CD4-positive, alpha-beta memory T cell (primary cell): ENCODE measurements at regions of chr12 and their contacts with region 1.

Region 1: DNA sequence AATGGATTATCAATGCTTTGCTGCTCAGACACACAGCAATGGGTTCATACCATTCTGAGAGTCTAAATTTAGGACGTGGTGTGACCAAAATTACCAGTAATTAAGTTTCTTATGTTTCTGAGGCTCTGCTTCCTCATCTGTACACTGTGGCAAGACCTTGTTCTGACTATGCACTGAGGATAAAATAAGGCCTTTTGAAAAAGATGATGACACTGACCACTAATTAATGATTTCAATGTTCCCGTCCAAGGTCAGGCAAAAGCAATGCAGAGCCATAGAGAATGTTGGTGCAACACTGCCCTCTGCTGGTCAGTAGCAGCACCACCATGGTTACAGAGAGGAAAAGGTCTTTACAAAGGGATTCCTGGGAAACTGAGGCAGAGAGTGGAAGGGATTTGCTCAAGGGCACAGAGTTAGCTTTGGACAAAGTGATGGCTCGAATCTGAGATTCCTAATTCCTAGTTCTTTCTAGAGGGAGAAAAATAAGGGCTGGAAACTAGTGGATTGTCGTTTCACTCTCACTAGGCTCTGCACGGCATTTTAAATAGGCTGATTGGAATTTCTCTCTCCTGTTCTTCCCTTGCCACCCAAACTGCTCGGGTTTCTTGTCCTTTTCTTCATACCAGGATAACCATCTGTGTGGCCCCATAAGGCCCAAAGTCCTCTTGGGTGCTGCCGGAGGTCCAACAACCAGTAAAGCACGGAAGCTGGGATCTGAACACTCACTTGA is 22.3 kb upstream of the P2RX7 start:
- DNase-seq: peak in 4 of 5 donors; percentile 50 to 56 (median 54)
- H3K4me3 ChIP-seq: no peak overlapping the region
- H3K4me3 Mint-ChIP-seq: no peak overlapping the region
- H3K27ac ChIP-seq: no peak overlapping the region
- H3K27ac Mint-ChIP-seq: peak overlapping the region in 2 of 7 donors; percentile 2 to 3
- H3K4me1 ChIP-seq: no peaks in the 10 kb centered on the region
- H3K4me1 Mint-ChIP-seq: peaks cover 0 to 5% (median 4%) of the 10 kb centered on the region in 4 donors
- H3K27me3 ChIP-seq: no peaks in the 10 kb centered on the region
- H3K27me3 Mint-ChIP-seq: no peaks in the 10 kb centered on the region

Region 2: GRCh38 chr12:120944645-120945231 is 165.6 kb before region 1 on chr12:
- CTCF ChIA-PET with region 1: interaction called, 10 read pairs
- POLR2A ChIA-PET with region 1: no interaction called
- intact Hi-C with region 1: no loop called
- DNase-seq: peak; percentile 43 to 57 (median 51)
- H3K4me3 ChIP-seq: no peak overlapping the region
- H3K4me3 Mint-ChIP-seq: no peak overlapping the region
- H3K27ac ChIP-seq: no peak overlapping the region
- H3K27ac Mint-ChIP-seq: peak overlapping the region in 2 of 7 donors; percentile 25 to 53
- H3K4me1 ChIP-seq: no peaks in the 10 kb centered on the region
- H3K4me1 Mint-ChIP-seq: peaks cover 0 to 4% (median 2%) of the 10 kb centered on the region in 4 donors
- H3K27me3 ChIP-seq: no peaks in the 10 kb centered on the region
- H3K27me3 Mint-ChIP-seq: peaks cover 0 to 1% of the 10 kb centered on the region in 2 donors

Region 3: GRCh38 chr12:121005346-121005815 is 105.0 kb before region 1 on chr12:
- CTCF ChIA-PET with region 1: interaction called, 3 read pairs
- POLR2A ChIA-PET with region 1: no interaction called
- intact Hi-C with region 1: loop called (anchors 5 kb)
- DNase-seq: peak in 4 of 5 donors; percentile 16 to 32 (median 25)
- H3K4me3 ChIP-seq: no peak overlapping the region
- H3K4me3 Mint-ChIP-seq: no peak overlapping the region
- H3K27ac ChIP-seq: no peak overlapping the region
- H3K27ac Mint-ChIP-seq: peak overlapping the region in 3 of 7 donors; percentile 15 to 73 (median 42)
- H3K4me1 ChIP-seq: no peaks in the 10 kb centered on the region
- H3K4me1 Mint-ChIP-seq: no peaks in the 10 kb centered on the region
- H3K27me3 ChIP-seq: no peaks in the 10 kb centered on the region
- H3K27me3 Mint-ChIP-seq: no peaks in the 10 kb centered on the region

Region 4: DNA sequence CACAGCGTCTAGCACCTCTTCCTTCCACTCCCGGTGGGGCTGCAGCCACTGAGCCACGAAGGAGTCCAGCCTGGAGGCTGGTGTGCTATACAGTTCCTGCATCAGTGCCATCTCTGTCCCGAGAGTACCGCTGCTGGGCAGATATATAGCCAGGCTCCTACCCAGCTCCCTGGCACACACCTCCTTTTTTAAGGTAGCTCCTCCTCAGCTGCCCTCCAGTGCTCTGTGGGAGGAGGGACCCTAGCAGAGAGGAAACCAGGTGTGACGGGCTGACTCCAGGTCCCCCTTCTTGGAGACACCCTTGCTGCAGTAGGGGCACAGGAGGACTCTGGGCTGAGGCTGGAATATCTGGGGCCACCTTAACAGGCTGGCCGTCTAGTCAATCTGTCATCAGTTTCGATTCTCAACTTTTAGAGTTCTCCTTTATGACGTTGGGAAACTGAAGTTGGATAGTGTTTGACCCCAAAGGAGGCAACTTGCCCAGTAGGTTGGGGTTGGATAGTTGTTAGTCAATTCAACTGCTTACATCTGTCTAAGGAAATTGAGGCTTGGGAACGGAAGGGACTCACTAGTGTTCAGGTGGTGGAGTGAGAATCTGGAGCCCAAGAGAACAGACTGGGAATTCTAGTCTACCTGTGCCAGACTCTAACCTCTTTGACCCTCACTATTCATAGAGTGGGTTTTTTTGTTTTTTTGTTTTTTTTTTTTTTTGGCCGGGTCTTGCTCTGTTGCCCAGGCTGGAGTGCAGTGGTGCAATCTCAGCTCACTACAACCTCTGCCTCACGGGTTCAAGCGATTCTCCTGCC is 71.3 kb before region 1 on chr12 and contains the start of gene OASL:
- CTCF ChIA-PET with region 1: no interaction called
- POLR2A ChIA-PET with region 1: no interaction called
- intact Hi-C with region 1: no loop called
- DNase-seq: peak; percentile 62 to 82 (median 62)
- H3K4me3 ChIP-seq: peak within 1 kb of the TSS; percentile 80 to 86
- H3K4me3 Mint-ChIP-seq: peak within 1 kb of the TSS; percentile 97 to 100 (median 98)
- H3K27ac ChIP-seq: peak within 1 kb of the TSS; percentile 78
- H3K27ac Mint-ChIP-seq: peak within 1 kb of the TSS; percentile 96 to 100 (median 98)
- H3K4me1 ChIP-seq: peaks cover 45% of the 10 kb centered on the region
- H3K4me1 Mint-ChIP-seq: peaks cover 28 to 65% (median 38%) of the 10 kb centered on the region in 4 donors
- H3K27me3 ChIP-seq: no peaks in the 10 kb centered on the region
- H3K27me3 Mint-ChIP-seq: peaks cover 3 to 5% of the 10 kb centered on the region in 2 donors
- total RNA-seq, gene OASL: 7.2 to 9.7 TPM

Region 5: GRCh38 chr12:121085506-121086353 is 24.6 kb before region 1 on chr12:
- CTCF ChIA-PET with region 1: no interaction called
- POLR2A ChIA-PET with region 1: no interaction called
- intact Hi-C with region 1: no loop called
- DNase-seq: no peak
- H3K4me3 ChIP-seq: no peak overlapping the region
- H3K4me3 Mint-ChIP-seq: no peak overlapping the region
- H3K27ac ChIP-seq: no peak overlapping the region
- H3K27ac Mint-ChIP-seq: peak overlapping the region in 1 of 7 donors; percentile 36
- H3K4me1 ChIP-seq: peaks cover 6% of the 10 kb centered on the region
- H3K4me1 Mint-ChIP-seq: peaks cover 12 to 25% (median 17%) of the 10 kb centered on the region in 4 donors
- H3K27me3 ChIP-seq: no peaks in the 10 kb centered on the region
- H3K27me3 Mint-ChIP-seq: no peaks in the 10 kb centered on the region

Region 6: DNA sequence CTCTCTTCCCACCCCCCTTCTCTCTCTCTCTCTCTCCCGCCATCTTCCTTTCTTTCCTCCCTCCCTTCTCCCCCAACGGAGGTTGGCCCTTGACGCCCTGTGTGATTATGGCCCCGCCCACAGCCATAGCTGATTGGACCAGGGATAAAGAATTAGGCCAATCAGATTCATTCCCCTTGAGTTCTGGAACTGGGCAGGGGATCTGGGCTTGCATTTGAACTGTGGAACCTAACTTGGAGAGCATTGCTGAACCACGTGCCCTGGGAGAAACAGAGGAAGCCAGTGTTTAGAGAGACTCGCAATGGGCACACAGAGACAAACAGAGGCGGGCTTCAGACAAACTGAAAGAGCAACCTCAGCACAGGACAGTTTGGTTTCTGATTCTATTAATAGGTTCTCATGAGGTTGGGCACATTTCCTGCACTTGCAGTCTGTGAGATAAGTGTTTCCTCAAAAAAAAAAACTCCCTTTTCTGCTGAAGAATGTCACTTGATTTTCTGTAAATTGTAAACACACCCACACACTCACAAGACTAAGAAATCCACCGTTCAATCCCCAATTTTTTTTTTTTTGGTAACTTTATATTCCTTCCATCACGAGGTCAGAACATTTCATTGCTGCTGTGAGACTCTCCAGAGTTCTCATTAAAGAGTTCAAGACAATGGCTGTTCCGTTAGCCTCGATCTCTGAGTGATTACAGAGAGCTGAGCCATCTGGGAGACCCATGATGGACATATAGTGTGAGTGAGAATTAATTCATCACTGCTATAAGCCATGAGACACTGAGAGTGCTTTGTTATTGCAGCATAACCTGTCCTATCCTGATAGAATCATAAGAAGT is 18.8 kb after region 1 on chr12:
- CTCF ChIA-PET with region 1: interaction called, 4 read pairs
- POLR2A ChIA-PET with region 1: no interaction called
- intact Hi-C with region 1: loop called (anchors 2 kb)
- DNase-seq: peak; percentile 79 to 88 (median 84)
- H3K4me3 ChIP-seq: peak overlapping the region; percentile 31 to 36
- H3K4me3 Mint-ChIP-seq: peak overlapping the region; percentile 79 to 91 (median 86)
- H3K27ac ChIP-seq: peak overlapping the region; percentile 53
- H3K27ac Mint-ChIP-seq: peak overlapping the region; percentile 88 to 97 (median 93)
- H3K4me1 ChIP-seq: peaks cover 70% of the 10 kb centered on the region
- H3K4me1 Mint-ChIP-seq: peaks cover 57 to 93% (median 68%) of the 10 kb centered on the region in 4 donors
- H3K27me3 ChIP-seq: no peaks in the 10 kb centered on the region
- H3K27me3 Mint-ChIP-seq: no peaks in the 10 kb centered on the region

Region 7: DNA sequence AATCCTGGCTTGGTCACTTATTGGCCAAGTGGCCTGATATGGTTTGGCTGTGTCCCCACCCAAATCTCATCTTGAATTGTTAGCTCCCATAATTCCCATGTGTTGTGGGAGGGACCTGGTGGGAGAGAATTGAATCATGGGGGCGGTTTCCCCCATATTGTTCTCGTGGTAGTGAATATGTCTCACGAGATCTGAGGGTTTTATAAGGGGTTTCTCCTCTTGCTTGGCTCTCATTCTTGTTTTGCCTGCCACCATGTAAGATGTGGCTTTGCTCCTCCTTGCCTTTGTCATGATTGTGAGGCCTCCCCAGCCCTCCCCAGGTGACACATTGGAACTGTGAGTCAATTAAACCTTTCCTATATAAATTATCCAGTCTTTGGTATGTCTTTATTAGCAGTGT is 80.8 kb after region 1 on chr12:
- CTCF ChIA-PET with region 1: no interaction called
- POLR2A ChIA-PET with region 1: no interaction called
- intact Hi-C with region 1: no loop called
- DNase-seq: no peak
- H3K4me3 ChIP-seq: no peak overlapping the region
- H3K4me3 Mint-ChIP-seq: no peak overlapping the region
- H3K27ac ChIP-seq: no peak overlapping the region
- H3K27ac Mint-ChIP-seq: no peak overlapping the region
- H3K4me1 ChIP-seq: no peaks in the 10 kb centered on the region
- H3K4me1 Mint-ChIP-seq: peaks cover 0 to 2% (median 0%) of the 10 kb centered on the region in 4 donors
- H3K27me3 ChIP-seq: no peaks in the 10 kb centered on the region
- H3K27me3 Mint-ChIP-seq: peaks cover 0 to 2% of the 10 kb centered on the region in 2 donors

Region 8: DNA sequence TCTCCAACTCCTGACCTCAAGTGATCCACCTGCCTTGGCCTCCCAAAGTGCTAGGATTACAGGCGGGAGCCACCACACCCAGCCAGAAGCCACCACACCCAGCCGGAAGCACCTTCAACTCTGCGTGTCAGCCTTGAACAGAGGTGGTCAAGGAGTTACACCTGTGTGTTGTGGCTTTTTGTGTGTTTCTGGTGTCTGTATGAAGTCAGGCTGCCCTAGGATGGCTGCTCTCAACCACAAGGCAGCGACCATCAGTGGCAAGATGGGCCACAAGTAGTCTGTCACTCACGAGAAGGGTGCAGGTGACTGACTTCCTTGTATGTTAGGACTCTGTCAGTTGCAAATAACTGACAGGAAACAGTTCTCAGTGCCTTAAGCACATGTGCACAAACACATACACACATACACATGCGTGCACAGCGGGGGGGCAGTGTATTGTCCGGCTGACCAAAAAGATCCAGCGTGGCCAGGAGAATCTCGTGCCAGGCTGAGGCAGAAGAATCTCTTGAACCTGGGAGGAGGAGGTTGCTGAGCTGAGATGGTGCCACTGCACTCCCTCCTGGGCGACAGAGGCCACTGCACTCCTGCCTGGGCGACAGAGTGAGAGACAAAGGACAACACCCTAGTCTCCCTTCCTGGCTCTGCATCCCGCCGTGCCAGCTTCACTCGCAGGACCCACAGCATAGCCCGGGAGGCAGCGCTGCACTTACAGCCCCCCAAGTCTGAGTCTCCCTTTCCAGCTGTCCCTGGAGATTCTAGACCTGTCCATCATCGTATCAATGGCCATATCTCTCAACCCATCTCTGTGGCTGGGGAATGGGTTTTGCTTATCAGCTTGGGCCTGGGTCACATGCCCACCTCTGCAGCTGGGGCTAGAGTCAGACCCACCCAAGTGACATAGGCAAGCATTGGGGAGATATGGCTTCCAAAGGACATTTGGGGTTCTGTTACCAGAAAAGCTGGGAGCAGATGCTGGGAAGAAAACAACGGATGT is 113.2 kb after region 1 on chr12:
- CTCF ChIA-PET with region 1: interaction called, 3 read pairs
- POLR2A ChIA-PET with region 1: no interaction called
- intact Hi-C with region 1: loop called (anchors 1 kb)
- DNase-seq: peak; percentile 34 to 64 (median 53)
- H3K4me3 ChIP-seq: peak overlapping the region in 1 of 2 donors; percentile 0
- H3K4me3 Mint-ChIP-seq: peak overlapping the region in 7 of 8 donors; percentile 19 to 84 (median 72)
- H3K27ac ChIP-seq: peak overlapping the region; percentile 47
- H3K27ac Mint-ChIP-seq: peak overlapping the region; percentile 86 to 97 (median 95)
- H3K4me1 ChIP-seq: peaks cover 52% of the 10 kb centered on the region
- H3K4me1 Mint-ChIP-seq: peaks cover 32 to 61% (median 44%) of the 10 kb centered on the region in 4 donors
- H3K27me3 ChIP-seq: no peaks in the 10 kb centered on the region
- H3K27me3 Mint-ChIP-seq: no peaks in the 10 kb centered on the region